OCI-LY7 (cell line): ENCODE measurements at regions of chr3 and their contacts with region 1.

Region 1: DNA sequence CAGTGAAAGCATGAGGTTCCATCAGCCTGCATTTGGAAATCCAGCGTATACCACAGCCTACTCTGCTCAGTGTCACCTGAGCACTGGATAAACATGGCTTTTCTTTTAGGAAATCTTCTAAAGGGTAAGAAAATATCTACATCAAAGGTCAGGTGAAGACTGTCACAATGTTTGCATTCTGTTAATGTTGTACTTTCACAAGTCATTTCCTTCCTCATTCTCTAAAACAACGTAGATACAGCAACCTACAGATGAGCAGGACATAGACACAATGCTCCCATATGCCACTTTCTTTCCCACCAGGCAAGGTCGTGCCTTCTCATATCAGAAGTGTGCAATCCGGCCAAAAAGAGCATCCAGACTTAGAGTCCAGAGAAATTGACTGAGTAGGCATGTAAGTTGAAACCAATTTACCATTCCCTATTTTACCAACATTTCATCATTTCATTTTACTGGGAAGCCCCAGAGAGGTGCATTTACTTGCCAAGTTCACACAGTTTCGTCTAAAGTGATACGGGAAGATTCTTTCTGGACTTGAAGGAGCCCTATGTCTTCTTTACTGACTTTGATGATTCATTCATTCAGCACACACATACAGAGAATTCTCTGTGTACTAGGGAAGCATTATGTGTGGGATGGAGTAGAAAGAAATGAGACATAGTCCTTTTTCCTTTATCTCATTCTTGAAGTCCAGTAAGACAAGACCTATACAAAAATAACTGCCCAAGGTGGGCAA is 30.6 kb upstream of the LPP start:
- DNase-seq: peak; percentile 77
- H3K4me3 ChIP-seq: peak overlapping the region; percentile 26
- H3K27ac ChIP-seq: peak overlapping the region; percentile 62
- H3K4me1 ChIP-seq: peaks cover 47% of the 10 kb centered on the region
- CTCF ChIP-seq: no peak

Region 2: DNA sequence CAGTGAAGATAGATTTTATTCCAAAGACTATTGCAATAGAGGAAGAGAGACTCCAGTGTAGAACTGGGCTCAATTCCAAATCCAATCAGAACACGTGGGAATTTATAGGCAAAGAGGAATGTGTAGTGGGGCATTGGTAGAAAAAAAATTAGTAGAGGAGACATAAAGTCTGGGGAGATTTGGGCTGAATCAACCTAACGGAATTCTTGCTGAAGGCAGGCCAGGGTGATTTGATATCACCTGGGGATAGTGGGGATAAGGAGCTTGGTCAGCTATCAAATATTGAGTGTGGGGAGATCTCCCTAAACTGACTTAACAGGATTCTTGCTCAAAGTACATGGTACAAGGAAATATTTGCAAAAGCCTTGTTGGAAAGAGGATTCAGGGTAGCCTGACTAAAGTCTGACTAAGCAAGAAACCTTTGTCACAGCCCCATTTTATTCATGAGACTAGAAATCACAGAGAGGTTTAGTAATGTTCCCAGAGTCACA is 482.7 kb before region 1 on chr3:
- CTCF ChIA-PET with region 1: no interaction called
- POLR2A ChIA-PET with region 1: no interaction called
- intact Hi-C with region 1: no loop called
- DNase-seq: no peak
- H3K4me3 ChIP-seq: no peak overlapping the region
- H3K27ac ChIP-seq: no peak overlapping the region
- H3K4me1 ChIP-seq: no peaks in the 10 kb centered on the region
- CTCF ChIP-seq: no peak

Region 3: DNA sequence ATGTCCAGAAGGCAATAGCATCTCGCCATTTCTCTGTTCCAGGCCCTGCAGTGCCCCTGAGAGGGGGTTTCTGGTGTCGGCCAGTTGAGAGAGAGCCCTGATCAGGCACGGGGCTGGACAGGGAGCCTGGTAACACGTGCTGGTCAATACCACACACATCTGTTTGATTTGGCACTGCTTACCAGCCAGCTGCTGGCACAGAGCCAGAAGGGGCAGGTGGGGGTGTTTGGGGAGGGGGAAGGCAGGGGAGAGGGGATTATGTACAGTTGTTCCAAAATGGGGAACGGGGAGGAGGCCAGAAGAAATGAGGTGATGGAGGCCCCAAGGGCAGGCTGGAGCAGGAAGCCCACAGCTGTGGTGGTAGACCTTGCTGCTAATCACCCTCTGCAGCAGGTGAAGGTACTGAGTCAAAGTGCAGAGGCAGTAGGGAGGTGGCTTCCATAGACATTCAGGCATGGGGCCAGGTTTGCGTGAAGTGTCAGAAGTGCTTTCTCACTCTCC is 122.9 kb before region 1 on chr3:
- CTCF ChIA-PET with region 1: no interaction called
- POLR2A ChIA-PET with region 1: no interaction called
- intact Hi-C with region 1: no loop called
- DNase-seq: peak; percentile 82
- H3K4me3 ChIP-seq: peak overlapping the region; percentile 60
- H3K27ac ChIP-seq: peak overlapping the region; percentile 96
- H3K4me1 ChIP-seq: peaks cover 83% of the 10 kb centered on the region
- CTCF ChIP-seq: no peak

Region 4: DNA sequence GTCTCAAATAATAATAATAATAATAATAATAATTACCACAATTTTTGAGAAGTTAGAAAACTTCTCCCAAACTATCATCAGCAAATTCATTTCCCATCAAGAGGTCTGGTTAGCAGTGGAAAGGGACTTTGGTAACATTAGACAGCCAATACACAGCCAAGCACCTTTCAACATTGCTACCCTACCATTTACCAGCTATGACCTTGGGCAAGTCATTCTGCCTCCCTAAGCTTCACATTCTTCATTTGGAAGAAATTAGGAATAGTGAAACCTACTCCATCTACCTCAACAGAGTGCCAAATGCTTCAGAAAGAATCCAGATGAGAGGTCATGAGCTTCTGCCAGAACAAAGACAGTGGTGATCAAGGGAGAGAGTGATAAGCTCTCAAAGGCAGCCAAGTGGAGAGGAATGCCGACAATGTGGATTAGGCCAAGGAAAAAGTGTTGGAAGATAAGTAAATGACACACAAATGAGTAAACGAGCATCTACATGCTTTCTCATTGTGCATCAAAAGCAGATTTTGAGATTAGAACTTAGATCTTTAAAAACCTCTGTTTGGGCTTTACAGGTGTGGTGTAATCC is 12.2 kb before region 1 on chr3:
- CTCF ChIA-PET with region 1: no interaction called
- POLR2A ChIA-PET with region 1: interaction called, 13 read pairs
- intact Hi-C with region 1: no loop called
- DNase-seq: no peak
- H3K4me3 ChIP-seq: no peak overlapping the region
- H3K27ac ChIP-seq: no peak overlapping the region
- H3K4me1 ChIP-seq: peaks cover 57% of the 10 kb centered on the region
- CTCF ChIP-seq: no peak

Region 5: GRCh38 chr3:188137051-188137450 is 13.7 kb after region 1 on chr3:
- CTCF ChIA-PET with region 1: no interaction called
- POLR2A ChIA-PET with region 1: interaction called, 10 read pairs
- intact Hi-C with region 1: no loop called
- DNase-seq: peak; percentile 49
- H3K4me3 ChIP-seq: no peak overlapping the region
- H3K27ac ChIP-seq: no peak overlapping the region
- H3K4me1 ChIP-seq: peaks cover 14% of the 10 kb centered on the region
- CTCF ChIP-seq: no peak

Region 6: DNA sequence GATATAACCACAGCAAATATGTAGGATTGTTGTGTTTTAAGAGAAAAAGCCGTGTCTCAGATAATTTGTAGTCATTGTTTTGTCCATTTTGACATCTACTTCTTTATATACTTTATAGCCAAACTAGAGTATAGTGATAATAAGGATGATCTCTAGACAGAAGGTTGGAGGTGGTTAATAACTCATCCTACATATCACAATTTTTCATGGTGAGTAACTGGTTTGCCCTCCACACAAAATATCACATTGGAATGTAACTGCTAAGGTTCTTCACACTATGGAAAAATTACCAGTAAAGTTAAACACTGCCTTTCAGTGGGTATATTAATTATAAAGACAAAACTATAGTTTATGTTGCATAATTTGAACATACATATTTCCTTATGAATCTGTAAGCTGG is 411.3 kb after region 1 on chr3:
- CTCF ChIA-PET with region 1: no interaction called
- POLR2A ChIA-PET with region 1: no interaction called
- intact Hi-C with region 1: no loop called
- DNase-seq: no peak
- H3K4me3 ChIP-seq: no peak overlapping the region
- H3K27ac ChIP-seq: no peak overlapping the region
- H3K4me1 ChIP-seq: no peaks in the 10 kb centered on the region
- CTCF ChIP-seq: no peak